ENCODE measurements at regions of chr13 and their contacts with region 1.

Region 1: DNA sequence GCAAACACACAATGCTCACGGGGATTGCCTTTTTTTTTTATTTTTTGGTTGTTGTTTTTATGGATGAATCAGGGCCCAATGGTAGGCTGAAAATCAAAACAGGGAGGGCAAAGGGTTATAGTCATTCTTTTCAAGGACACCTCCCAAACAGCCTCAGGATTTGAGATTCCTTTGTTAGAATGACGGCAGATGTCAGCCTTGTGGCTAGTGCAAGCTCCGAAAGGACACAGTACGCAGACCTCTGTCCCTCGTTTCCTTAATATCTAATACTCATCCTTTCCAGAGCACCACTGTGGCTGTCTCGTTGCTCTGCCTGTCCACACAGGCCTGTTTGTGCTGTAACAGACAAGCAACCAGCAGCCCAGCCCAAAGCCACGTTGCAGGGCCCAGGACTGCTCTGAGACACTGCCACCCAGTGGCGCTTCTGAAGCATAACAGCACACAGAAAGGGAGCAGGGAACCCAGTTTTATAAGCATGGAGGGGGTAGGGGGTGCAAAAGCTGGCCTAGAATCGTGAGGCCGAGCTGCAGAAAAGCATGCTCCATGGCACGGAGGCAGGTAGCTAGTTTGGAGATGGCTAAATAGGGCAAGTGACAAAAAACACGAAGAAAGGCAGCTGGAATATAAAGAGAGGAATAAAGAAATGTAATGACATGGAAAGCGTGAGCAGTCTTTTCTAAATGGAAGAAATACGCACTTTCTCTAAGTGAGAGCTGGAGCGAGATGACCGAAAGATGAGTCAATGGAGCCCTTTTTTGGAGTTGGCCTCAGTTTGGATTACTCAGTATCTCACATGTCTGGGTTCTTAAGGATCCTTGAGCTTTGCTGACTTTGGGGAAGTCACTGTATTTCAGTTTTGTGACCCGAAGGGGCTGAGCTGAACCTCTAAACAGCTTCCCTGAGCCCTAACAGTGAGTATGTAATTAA is 40.7 kb upstream of the MEDAG start:
- DNase-seq: peak; percentile 67
- H3K4me3 Mint-ChIP-seq: no peak overlapping the region
- H3K27ac Mint-ChIP-seq: no peak overlapping the region
- H3K4me1 Mint-ChIP-seq: no peaks in the 10 kb centered on the region
- H3K27me3 Mint-ChIP-seq: peaks cover 52% of the 10 kb centered on the region

Region 2: DNA sequence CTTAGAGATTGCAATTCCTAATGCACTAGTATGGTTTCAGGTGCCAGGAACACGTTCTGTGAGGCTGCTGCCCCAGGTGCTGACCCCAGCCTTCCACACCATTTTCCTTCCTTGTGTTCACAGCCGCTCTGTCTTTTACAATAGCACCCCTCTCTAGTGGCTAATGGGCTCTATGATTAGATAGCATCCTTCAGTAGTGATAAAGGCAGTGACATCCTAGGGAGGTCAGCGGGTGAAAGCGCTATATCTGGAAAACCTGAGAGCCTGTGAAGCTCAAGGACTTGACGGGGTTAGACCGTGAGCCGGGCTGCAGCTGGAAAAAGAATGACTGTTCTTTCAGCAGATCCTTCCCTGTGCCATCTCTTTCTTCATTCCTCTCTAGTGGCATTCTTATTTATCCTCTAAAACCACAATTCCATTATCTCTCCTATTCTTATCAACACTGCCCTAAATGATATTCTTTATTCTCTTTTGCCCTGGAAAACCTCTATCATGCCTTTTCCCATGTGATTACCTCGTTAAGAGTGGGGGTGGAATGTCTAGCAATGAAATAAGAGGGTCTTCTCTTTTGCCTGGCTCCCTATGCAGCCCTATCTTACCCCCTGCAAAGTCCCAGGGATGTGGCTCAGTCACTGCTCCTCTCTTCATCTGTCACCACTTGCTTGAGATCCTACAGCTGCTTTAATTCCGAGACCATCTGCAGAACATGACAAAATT is 108.2 kb before region 1 on chr13:
- CTCF ChIA-PET with region 1: no interaction called
- DNase-seq: no peak
- H3K4me3 Mint-ChIP-seq: no peak overlapping the region
- H3K27ac Mint-ChIP-seq: no peak overlapping the region
- H3K4me1 Mint-ChIP-seq: peaks cover 9% of the 10 kb centered on the region
- H3K27me3 Mint-ChIP-seq: no peaks in the 10 kb centered on the region

Region 3: DNA sequence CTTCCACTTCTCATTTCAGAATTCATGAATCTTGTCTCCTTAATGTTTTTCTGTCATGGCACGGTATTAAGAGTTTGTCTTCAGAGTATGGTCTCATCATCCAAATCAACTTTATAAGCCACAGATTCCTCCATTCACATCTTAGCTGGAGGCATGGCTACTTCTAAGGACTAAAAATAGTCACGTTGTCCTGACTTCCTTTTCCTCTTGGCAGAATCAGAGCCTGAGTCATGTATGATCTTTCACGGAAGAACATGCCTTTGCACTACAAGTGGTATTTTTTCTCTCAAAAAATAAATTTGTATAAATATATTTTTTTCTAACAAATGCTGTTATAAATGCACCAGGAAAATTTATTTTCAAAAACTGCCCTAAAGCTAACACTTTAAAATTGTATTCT is 58.6 kb before region 1 on chr13:
- CTCF ChIA-PET with region 1: interaction called, 12 read pairs
- DNase-seq: no peak
- H3K4me3 Mint-ChIP-seq: no peak overlapping the region
- H3K27ac Mint-ChIP-seq: no peak overlapping the region
- H3K4me1 Mint-ChIP-seq: peaks cover 16% of the 10 kb centered on the region
- H3K27me3 Mint-ChIP-seq: peaks cover 29% of the 10 kb centered on the region

Region 4: GRCh38 chr13:31044377-31045285 is 179.2 kb after region 1 on chr13:
- CTCF ChIA-PET with region 1: interaction called, 19 read pairs
- DNase-seq: peak; percentile 89
- H3K4me3 Mint-ChIP-seq: no peak overlapping the region
- H3K27ac Mint-ChIP-seq: peak overlapping the region; percentile 73
- H3K4me1 Mint-ChIP-seq: peaks cover 55% of the 10 kb centered on the region
- H3K27me3 Mint-ChIP-seq: peaks cover 24% of the 10 kb centered on the region

Region 5: GRCh38 chr13:31649766-31650165 is 784.4 kb after region 1 on chr13:
- CTCF ChIA-PET with region 1: no interaction called
- DNase-seq: no peak
- H3K4me3 Mint-ChIP-seq: no peak overlapping the region
- H3K27ac Mint-ChIP-seq: no peak overlapping the region
- H3K4me1 Mint-ChIP-seq: no peaks in the 10 kb centered on the region
- H3K27me3 Mint-ChIP-seq: no peaks in the 10 kb centered on the region

Measured in activated naive CD4-positive, alpha-beta T cell treated with anti-CD3 and anti-CD28 coated beads, Interleukin-2, amount 10 ng/mL, durations not matched to agents 7 days and 5 days (primary cell).